WTC11 (cell line): ENCODE measurements at regions of chr6 and their contacts with region 1.

Region 1: DNA sequence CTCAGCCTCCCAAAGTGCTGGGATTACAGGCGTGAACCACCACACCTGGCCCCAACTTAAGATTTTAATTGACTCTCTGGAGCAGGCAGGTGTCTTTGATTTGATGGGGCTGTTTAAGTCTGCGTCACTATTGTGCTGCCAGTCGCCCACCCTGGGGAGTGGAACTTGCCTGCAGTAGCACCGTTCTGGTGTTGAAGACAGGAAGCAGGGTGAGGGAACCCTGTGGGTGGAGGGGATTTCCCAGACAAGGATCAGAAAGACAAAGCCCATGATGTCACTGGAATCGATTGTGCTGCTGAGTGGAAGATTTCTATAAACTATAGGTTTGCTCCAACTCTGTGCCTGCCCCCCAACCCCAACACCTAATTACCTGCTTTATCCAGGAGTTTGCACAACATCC is 11.0 kb downstream of the ALDH8A1 start:
- DNase-seq: no peak
- ATAC-seq: peak; percentile 25; the same call in 1 of the 2 replicates
- H3K4me3 Mint-ChIP-seq: no peak overlapping the region
- H3K27ac Mint-ChIP-seq: no peak overlapping the region
- H3K4me1 Mint-ChIP-seq: peaks cover 5% of the 10 kb centered on the region; the same call in 1 of the 2 replicates
- H3K27me3 Mint-ChIP-seq: no peaks in the 10 kb centered on the region
- CTCF ChIP-seq: no peak

Region 2: GRCh38 chr6:134863771-134864510 is 75.0 kb before region 1 on chr6:
- CTCF ChIA-PET with region 1: no interaction called
- POLR2A ChIA-PET with region 1: no interaction called
- DNase-seq: no peak
- ATAC-seq: no peak
- H3K4me3 Mint-ChIP-seq: no peak overlapping the region
- H3K27ac Mint-ChIP-seq: no peak overlapping the region
- H3K4me1 Mint-ChIP-seq: no peaks in the 10 kb centered on the region
- H3K27me3 Mint-ChIP-seq: no peaks in the 10 kb centered on the region
- CTCF ChIP-seq: no peak

Region 3: DNA sequence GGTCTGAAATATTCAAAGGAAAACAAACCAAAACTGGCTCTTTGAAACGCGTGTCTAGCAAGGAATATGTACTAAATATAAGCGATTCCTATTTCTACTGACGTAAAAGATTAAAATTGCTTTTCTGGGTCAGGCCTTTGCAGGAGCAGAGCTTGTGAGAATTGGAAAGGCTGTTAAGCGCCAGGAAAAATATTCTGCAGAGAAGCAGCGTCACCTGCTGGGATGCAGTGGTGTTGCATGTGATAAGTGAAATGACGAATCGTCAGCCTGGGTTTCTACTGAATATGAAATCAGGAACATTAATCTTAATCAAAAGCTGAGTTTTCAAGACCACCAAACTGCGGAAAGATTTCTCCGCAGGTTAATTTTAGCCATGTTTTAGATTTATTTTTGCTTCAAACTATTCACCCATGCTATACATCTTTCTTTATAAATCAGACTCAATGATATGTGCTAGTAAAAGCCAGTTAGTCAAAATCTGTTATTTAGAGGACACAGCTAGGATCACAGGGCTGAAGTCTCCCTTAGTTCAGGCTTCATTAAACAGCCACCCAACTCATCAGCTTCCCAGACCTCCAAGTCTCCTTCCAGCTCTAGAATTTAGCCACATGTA is 56.4 kb before region 1 on chr6:
- CTCF ChIA-PET with region 1: interaction called, 19 read pairs
- POLR2A ChIA-PET with region 1: no interaction called
- DNase-seq: peak; percentile 73
- ATAC-seq: peak; percentile 77
- H3K4me3 Mint-ChIP-seq: no peak overlapping the region
- H3K27ac Mint-ChIP-seq: no peak overlapping the region
- H3K4me1 Mint-ChIP-seq: no peaks in the 10 kb centered on the region
- H3K27me3 Mint-ChIP-seq: no peaks in the 10 kb centered on the region; the same call in 1 of the 2 replicates
- CTCF ChIP-seq: peak; percentile 86

Region 4: GRCh38 chr6:134918418-134918961 is 20.4 kb before region 1 on chr6:
- CTCF ChIA-PET with region 1: interaction called, 12 read pairs
- POLR2A ChIA-PET with region 1: no interaction called
- DNase-seq: no peak
- ATAC-seq: peak; percentile 59
- H3K4me3 Mint-ChIP-seq: no peak overlapping the region
- H3K27ac Mint-ChIP-seq: no peak overlapping the region
- H3K4me1 Mint-ChIP-seq: peaks cover 8% of the 10 kb centered on the region; the same call in 1 of the 2 replicates
- H3K27me3 Mint-ChIP-seq: no peaks in the 10 kb centered on the region
- CTCF ChIP-seq: no peak

Region 5: DNA sequence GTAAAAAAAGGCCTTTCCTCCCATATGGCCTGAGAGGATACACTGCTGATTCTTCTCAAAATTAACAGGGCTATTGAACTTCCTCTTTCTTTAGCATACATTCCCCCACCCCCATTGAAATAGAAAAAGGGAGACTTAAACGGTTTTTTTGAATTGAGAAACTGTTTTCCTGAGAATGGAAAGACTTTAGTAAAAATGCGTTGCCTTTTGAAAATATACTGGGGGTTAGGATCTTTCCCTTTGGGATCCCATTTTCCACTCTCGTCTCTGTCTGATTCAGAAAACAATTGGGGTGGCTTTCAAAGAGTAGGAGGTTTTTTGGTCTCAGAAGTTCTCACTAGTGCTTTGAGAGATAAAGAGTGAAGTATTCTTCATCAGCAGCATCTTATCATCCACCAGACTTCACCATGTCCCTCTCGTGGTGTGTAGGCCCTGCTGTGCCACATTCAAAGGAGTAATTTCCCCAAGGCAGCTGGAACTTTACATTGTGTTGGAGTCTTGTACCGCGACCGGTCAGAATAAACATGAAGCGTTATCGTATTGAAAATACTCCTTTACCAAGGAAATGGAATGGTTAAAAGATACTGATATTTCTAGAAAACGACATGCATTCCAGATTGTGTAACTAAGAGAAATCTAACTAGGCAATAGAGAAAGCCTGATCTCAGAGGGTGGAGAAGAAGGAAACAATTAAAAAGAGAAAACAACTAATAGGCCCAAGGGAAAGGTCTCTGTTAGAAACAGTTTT is 252.8 kb after region 1 on chr6:
- CTCF ChIA-PET with region 1: no interaction called
- POLR2A ChIA-PET with region 1: no interaction called
- DNase-seq: no peak
- ATAC-seq: no peak
- H3K4me3 Mint-ChIP-seq: no peak overlapping the region
- H3K27ac Mint-ChIP-seq: no peak overlapping the region
- H3K4me1 Mint-ChIP-seq: peaks cover 15% of the 10 kb centered on the region
- H3K27me3 Mint-ChIP-seq: no peaks in the 10 kb centered on the region
- CTCF ChIP-seq: no peak